IMR-90 (cell line): ENCODE measurements at regions of chr5 and their contacts with region 1.

Region 1: GRCh38 chr5:54243473-54244080 is 66.8 kb downstream of the ARL15 start:
- DNase-seq: peak; percentile 47
- ATAC-seq: peak; percentile 76
- H3K4me3 ChIP-seq: no peak overlapping the region
- H3K27ac ChIP-seq: no peak overlapping the region
- H3K4me1 ChIP-seq: no peaks in the 10 kb centered on the region
- H3K27me3 ChIP-seq: no peaks in the 10 kb centered on the region
- CTCF ChIP-seq: peak; percentile 83
- POLR2A ChIP-seq: no peak
- RAD21 ChIP-seq: peak; percentile 86

Region 2: GRCh38 chr5:54415896-54416601 is 172.5 kb after region 1 on chr5:
- CTCF ChIA-PET with region 1: interaction called, 11 read pairs
- POLR2A ChIA-PET with region 1: no interaction called
- dilution Hi-C with region 1: no loop called
- in situ Hi-C with region 1: no loop called
- intact Hi-C with region 1: loop called (anchors 1 kb)
- DNase-seq: peak; percentile 42
- ATAC-seq: peak; percentile 88
- H3K4me3 ChIP-seq: no peak overlapping the region
- H3K27ac ChIP-seq: no peak overlapping the region
- H3K4me1 ChIP-seq: peaks cover 3% of the 10 kb centered on the region
- H3K27me3 ChIP-seq: peaks cover 8% of the 10 kb centered on the region
- CTCF ChIP-seq: no peak
- POLR2A ChIP-seq: no peak
- RAD21 ChIP-seq: no peak

Region 3: DNA sequence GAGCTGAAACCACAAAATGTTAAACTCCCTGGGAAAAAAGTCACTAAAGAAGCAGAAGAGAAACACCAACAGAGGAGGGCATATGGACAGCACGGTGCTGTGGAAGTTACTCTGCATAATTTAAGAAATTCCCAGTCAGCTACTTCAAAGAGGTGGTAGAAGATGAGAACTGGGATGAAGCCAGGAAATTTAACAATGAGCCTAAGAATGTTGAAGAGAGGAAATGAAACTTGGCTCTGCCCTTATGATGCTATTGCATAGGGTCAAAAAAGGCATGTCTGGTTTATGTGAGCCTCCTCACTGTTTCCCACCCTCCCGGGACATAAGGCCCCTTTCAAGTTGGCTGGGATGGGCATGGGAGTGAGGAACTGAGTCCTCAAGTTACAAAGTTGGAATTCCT is 248.6 kb after region 1 on chr5:
- CTCF ChIA-PET with region 1: interaction called, 10 read pairs
- POLR2A ChIA-PET with region 1: no interaction called
- dilution Hi-C with region 1: no loop called
- in situ Hi-C with region 1: no loop called
- intact Hi-C with region 1: loop called (anchors 1 kb)
- DNase-seq: no peak
- ATAC-seq: no peak
- H3K4me3 ChIP-seq: no peak overlapping the region
- H3K27ac ChIP-seq: no peak overlapping the region
- H3K4me1 ChIP-seq: no peaks in the 10 kb centered on the region; the same call in 1 of the 2 replicates
- H3K27me3 ChIP-seq: peaks cover 14% of the 10 kb centered on the region; the same call in 1 of the 2 replicates
- CTCF ChIP-seq: no peak
- POLR2A ChIP-seq: no peak
- RAD21 ChIP-seq: no peak

Region 4: DNA sequence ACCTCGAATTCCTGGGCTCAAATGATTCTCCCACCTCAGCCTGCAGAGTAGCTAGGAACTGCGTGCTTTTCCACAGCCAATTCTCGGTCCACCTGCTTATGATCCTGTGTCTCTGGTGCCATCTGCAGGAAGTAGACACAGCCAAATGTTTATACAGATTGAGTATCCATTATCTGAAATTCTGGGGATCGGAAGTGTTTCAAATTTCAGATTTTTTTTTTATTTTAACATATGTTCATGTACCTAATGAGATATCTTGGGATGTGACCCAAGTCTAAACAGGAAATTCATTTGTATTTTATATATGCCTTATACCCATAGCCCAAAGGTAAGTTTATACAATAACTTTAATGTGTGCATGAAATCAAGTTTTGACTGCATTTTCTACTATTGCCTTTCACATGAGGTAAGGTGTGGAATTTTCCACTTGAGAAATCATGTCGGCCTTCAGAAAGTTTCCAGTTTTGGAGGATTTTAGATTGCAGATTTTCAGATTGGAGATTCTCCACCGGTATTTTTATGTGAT is 652.3 kb after region 1 on chr5:
- CTCF ChIA-PET with region 1: interaction called, 3 read pairs
- POLR2A ChIA-PET with region 1: no interaction called
- dilution Hi-C with region 1: no loop called
- in situ Hi-C with region 1: no loop called
- intact Hi-C with region 1: loop called (anchors 2 kb)
- DNase-seq: peak; percentile 68
- ATAC-seq: peak; percentile 92
- H3K4me3 ChIP-seq: no peak overlapping the region
- H3K27ac ChIP-seq: no peak overlapping the region
- H3K4me1 ChIP-seq: peaks cover 5% of the 10 kb centered on the region; the same call in 1 of the 2 replicates
- H3K27me3 ChIP-seq: peaks cover 4% of the 10 kb centered on the region; the same call in 1 of the 2 replicates
- CTCF ChIP-seq: peak; percentile 72
- POLR2A ChIP-seq: no peak
- RAD21 ChIP-seq: peak; percentile 76